Activated CD4-positive, alpha-beta T cell treated with anti-CD3 and anti-CD28 coated beads for 36 hours (primary cell): ENCODE measurements at regions of chr12 and their contacts with region 1.

Region 1: GRCh38 chr12:110826592-110827200 is 20.1 kb upstream of the CCDC63 start:
- DNase-seq: peak; percentile 94
- ATAC-seq: peak; percentile 98
- H3K4me3 Mint-ChIP-seq: peak overlapping the region; percentile 34
- H3K27ac Mint-ChIP-seq: peak overlapping the region; percentile 17
- H3K4me1 Mint-ChIP-seq: peaks cover 7% of the 10 kb centered on the region
- H3K27me3 Mint-ChIP-seq: no peaks in the 10 kb centered on the region

Region 2: DNA sequence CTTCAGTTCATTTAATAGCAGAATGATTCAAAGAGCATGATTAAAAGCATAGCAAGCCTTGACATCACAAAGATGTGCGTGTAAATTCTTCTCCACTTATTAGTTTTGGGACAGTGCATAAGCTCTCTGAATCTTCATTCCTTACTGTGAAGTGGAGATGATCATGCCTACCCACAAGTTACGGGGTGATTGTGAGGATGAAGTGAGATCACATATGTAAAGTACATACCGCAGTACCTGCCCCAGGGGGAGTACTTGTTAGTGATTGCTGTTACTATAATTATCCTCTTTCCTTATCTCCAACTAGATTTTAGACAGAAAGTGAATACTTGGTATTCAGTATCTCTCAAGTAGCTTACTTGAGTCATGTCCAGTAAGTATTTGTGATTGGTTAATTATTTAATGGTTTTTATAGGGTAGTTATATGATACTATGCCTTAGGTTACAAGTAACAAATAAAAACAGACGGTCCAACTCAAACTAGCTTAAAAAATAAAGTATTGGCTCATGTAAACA is 318.6 kb before region 1 on chr12:
- CTCF ChIA-PET with region 1: interaction called, 3 read pairs
- POLR2A ChIA-PET with region 1: no interaction called
- intact Hi-C with region 1: loop called in 1 of 2 experiments (anchors 1 kb)
- DNase-seq: no peak
- ATAC-seq: no peak
- H3K4me3 Mint-ChIP-seq: no peak overlapping the region
- H3K27ac Mint-ChIP-seq: no peak overlapping the region
- H3K4me1 Mint-ChIP-seq: no peaks in the 10 kb centered on the region
- H3K27me3 Mint-ChIP-seq: no peaks in the 10 kb centered on the region

Region 3: DNA sequence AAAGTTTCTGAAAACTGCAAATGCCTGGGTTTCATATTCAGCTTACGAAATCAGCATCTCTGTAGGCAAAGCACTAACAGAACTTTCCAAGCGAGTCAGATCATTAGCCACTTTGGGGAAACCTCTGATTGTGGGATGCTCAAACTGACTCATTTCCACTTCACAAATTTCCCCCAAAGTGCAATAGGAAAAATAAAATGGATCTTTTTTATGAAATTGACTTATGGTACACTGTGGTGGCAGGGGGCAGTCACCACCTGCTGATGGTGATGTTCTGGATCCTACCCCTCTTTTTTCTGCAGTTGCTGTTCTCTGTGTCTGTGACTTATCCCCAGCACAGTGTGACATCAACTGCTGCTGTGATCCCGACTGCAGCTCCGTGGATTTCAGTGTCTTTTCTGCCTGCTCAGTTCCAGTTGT is 207.2 kb before region 1 on chr12:
- CTCF ChIA-PET with region 1: interaction called, 6 read pairs
- POLR2A ChIA-PET with region 1: no interaction called
- intact Hi-C with region 1: loop called (anchors 1 kb)
- DNase-seq: peak; percentile 68
- ATAC-seq: peak; percentile 92
- H3K4me3 Mint-ChIP-seq: peak overlapping the region; percentile 19
- H3K27ac Mint-ChIP-seq: peak overlapping the region; percentile 55
- H3K4me1 Mint-ChIP-seq: peaks cover 20% of the 10 kb centered on the region
- H3K27me3 Mint-ChIP-seq: no peaks in the 10 kb centered on the region

Region 4: DNA sequence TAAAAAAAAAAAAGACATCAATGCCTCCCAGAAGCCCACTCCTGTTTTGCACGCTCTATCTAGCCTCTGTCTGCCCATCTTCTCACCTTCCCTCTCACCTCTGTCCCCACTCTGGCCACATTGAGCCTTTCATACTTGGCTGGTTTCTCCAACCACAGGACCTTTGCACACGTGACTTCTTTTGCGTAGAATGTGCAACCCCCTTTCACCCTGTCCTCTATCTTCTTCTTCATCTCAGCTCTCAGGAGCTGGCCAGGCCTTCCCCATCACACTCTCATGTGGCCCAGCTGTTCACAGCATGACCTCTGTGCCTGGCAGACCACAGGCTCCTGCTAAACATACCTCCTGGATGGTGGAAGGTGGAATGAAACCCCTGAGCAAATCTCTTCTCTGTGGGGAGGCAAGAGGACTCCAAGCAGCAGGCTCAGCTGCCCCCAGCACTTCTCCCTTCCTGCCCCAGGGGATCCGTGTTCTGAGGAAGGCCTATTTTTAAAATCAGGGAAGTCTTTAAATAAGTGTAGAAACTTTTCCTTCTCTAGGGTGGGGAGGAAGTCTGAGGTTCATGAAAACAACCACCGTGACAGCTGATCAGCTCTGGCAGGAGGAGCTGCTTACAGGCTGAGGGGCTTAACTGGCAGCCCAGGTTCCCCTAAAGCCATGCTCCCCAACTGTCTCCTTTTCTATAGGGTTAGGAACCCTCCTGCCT is 149.3 kb before region 1 on chr12:
- CTCF ChIA-PET with region 1: no interaction called
- POLR2A ChIA-PET with region 1: no interaction called
- intact Hi-C with region 1: no loop called
- DNase-seq: no peak
- ATAC-seq: peak; percentile 19
- H3K4me3 Mint-ChIP-seq: no peak overlapping the region
- H3K27ac Mint-ChIP-seq: no peak overlapping the region
- H3K4me1 Mint-ChIP-seq: peaks cover 18% of the 10 kb centered on the region
- H3K27me3 Mint-ChIP-seq: no peaks in the 10 kb centered on the region

Region 5: GRCh38 chr12:110717037-110717436 is 109.7 kb before region 1 on chr12:
- CTCF ChIA-PET with region 1: no interaction called
- POLR2A ChIA-PET with region 1: no interaction called
- intact Hi-C with region 1: loop called in 1 of 2 experiments (anchors 1 kb)
- DNase-seq: peak; percentile 43
- ATAC-seq: peak; percentile 74
- H3K4me3 Mint-ChIP-seq: no peak overlapping the region
- H3K27ac Mint-ChIP-seq: peak overlapping the region; percentile 43
- H3K4me1 Mint-ChIP-seq: peaks cover 21% of the 10 kb centered on the region
- H3K27me3 Mint-ChIP-seq: no peaks in the 10 kb centered on the region

Region 6: GRCh38 chr12:110856542-110856941 is 29.8 kb after region 1 on chr12:
- CTCF ChIA-PET with region 1: no interaction called
- POLR2A ChIA-PET with region 1: no interaction called
- intact Hi-C with region 1: no loop called
- DNase-seq: no peak
- ATAC-seq: no peak
- H3K4me3 Mint-ChIP-seq: no peak overlapping the region
- H3K27ac Mint-ChIP-seq: no peak overlapping the region
- H3K4me1 Mint-ChIP-seq: peaks cover 6% of the 10 kb centered on the region
- H3K27me3 Mint-ChIP-seq: peaks cover 3% of the 10 kb centered on the region

Region 7: DNA sequence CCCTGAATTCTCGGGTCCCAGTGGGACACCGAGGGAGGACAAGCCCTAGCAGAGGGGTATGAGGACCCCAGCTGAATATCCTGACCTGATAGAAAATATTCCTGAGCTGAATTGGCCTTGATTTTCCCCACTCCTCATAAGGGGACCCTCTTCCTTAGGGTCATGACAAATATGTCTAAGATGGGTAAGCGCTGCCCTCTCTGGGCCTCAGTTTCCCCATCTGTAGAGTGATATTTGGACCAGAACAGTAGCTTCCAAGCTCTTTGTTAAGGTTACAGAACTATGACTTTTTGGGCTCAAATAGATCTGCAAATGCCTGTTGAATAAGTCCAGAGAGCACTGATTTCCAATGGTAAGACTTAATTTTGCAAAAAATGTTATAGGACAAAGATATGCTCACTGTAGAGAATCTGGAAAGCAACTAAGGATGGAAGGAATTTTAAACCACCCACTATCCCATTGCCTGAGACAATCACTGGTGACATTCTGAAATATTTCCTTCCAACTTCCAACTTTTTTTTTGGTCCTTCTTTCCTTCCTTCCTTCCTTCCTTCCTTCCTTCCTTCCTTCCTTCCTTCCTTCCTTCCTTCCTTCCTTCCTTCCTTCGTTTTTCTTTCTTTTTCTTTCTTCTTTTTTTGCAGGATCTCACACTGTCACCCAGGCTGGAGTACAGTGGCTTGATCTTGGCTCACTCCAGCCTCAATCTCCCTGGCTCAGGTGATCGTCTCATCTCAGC is 61.7 kb after region 1 on chr12:
- CTCF ChIA-PET with region 1: interaction called, 4 read pairs
- POLR2A ChIA-PET with region 1: no interaction called
- intact Hi-C with region 1: loop called (anchors 1 to 5 kb)
- DNase-seq: no peak
- ATAC-seq: no peak
- H3K4me3 Mint-ChIP-seq: peak overlapping the region; percentile 80
- H3K27ac Mint-ChIP-seq: no peak overlapping the region
- H3K4me1 Mint-ChIP-seq: peaks cover 10% of the 10 kb centered on the region
- H3K27me3 Mint-ChIP-seq: peaks cover 4% of the 10 kb centered on the region